Activated CD4-positive, alpha-beta T cell treated with anti-CD3 and anti-CD28 coated beads for 36 hours (primary cell): ENCODE measurements at regions of chr14 and their contacts with region 1.

Region 1: DNA sequence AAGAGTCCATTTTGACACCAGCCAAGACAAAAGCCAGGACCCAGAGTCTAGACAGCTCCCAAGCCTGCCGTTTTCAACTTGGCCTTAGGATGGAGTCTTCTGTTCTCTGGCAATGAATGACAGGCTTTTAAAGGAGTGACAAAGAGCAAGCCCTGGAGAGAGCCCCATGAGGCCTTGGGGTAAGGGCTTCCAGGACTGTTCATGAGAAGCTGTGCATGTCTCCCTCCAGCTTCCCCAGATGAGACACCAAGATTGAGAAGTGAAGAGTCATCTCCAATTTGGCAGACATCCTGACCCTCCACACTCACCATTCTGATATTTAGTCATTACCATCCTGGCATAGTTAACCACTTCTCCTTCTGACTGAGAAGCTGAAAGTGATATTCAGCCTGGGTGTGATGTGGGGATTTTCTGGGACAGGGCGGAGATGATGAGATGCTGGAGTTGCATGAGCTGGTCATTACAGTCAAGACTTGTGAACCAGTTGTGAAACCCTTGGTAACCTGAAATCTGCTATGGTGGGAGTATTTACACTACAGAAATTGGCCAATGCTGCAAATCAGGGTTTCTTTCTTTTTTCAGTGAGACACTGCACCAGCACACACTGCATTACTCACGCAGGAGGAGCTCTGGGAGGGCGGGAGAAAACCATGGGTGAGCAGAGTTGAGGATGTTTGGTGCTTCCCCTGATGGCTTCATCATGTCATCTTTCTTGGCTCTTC is 77.8 kb downstream of the VCPKMT start:
- DNase-seq: peak; percentile 88
- ATAC-seq: peak; percentile 82
- H3K4me3 Mint-ChIP-seq: peak overlapping the region; percentile 75
- H3K27ac Mint-ChIP-seq: peak overlapping the region; percentile 99
- H3K4me1 Mint-ChIP-seq: peaks cover 66% of the 10 kb centered on the region
- H3K27me3 Mint-ChIP-seq: no peaks in the 10 kb centered on the region

Region 2: GRCh38 chr14:49785773-49786172 is 252.8 kb before region 1 on chr14:
- CTCF ChIA-PET with region 1: no interaction called
- POLR2A ChIA-PET with region 1: no interaction called
- intact Hi-C with region 1: no loop called
- DNase-seq: no peak
- ATAC-seq: no peak
- H3K4me3 Mint-ChIP-seq: no peak overlapping the region
- H3K27ac Mint-ChIP-seq: no peak overlapping the region
- H3K4me1 Mint-ChIP-seq: no peaks in the 10 kb centered on the region
- H3K27me3 Mint-ChIP-seq: no peaks in the 10 kb centered on the region

Region 3: GRCh38 chr14:49796025-49796424 is 242.5 kb before region 1 on chr14:
- CTCF ChIA-PET with region 1: no interaction called
- POLR2A ChIA-PET with region 1: no interaction called
- intact Hi-C with region 1: no loop called
- DNase-seq: no peak
- ATAC-seq: no peak
- H3K4me3 Mint-ChIP-seq: no peak overlapping the region
- H3K27ac Mint-ChIP-seq: peak overlapping the region; percentile 24
- H3K4me1 Mint-ChIP-seq: peaks cover 8% of the 10 kb centered on the region
- H3K27me3 Mint-ChIP-seq: no peaks in the 10 kb centered on the region

Region 4: GRCh38 chr14:49862089-49862673 is 176.4 kb before region 1 on chr14:
- CTCF ChIA-PET with region 1: interaction called, 17 read pairs
- POLR2A ChIA-PET with region 1: interaction called, 27 read pairs
- intact Hi-C with region 1: loop called in 1 of 2 experiments (anchors 1 kb)
- DNase-seq: peak; percentile 92
- ATAC-seq: peak; percentile 13
- H3K4me3 Mint-ChIP-seq: no peak overlapping the region
- H3K27ac Mint-ChIP-seq: no peak overlapping the region
- H3K4me1 Mint-ChIP-seq: peaks cover 20% of the 10 kb centered on the region
- H3K27me3 Mint-ChIP-seq: no peaks in the 10 kb centered on the region

Region 5: DNA sequence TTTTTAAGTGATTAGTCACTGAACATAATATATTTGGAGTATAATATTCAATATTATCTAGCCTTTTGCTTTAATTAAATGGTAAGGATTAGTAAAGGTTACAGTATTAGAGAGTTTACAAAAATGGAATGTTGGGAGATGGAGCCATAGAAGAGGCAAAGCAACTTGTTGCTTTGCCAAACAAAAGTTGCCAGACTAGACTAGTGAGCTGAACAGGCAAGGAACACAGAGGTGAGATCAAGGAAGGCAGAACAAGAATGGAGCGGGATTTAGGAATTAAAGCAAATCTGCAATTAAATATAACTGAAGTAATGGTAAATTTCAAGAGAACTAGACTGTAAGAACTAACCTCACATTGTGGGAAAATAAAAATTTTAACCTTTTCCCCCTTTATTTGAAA is 140.6 kb before region 1 on chr14:
- CTCF ChIA-PET with region 1: interaction called, 7 read pairs
- POLR2A ChIA-PET with region 1: interaction called, 36 read pairs
- intact Hi-C with region 1: loop called (anchors 1 kb)
- DNase-seq: no peak
- ATAC-seq: no peak
- H3K4me3 Mint-ChIP-seq: peak overlapping the region; percentile 91
- H3K27ac Mint-ChIP-seq: peak overlapping the region; percentile 98
- H3K4me1 Mint-ChIP-seq: peaks cover 32% of the 10 kb centered on the region
- H3K27me3 Mint-ChIP-seq: no peaks in the 10 kb centered on the region

Region 6: DNA sequence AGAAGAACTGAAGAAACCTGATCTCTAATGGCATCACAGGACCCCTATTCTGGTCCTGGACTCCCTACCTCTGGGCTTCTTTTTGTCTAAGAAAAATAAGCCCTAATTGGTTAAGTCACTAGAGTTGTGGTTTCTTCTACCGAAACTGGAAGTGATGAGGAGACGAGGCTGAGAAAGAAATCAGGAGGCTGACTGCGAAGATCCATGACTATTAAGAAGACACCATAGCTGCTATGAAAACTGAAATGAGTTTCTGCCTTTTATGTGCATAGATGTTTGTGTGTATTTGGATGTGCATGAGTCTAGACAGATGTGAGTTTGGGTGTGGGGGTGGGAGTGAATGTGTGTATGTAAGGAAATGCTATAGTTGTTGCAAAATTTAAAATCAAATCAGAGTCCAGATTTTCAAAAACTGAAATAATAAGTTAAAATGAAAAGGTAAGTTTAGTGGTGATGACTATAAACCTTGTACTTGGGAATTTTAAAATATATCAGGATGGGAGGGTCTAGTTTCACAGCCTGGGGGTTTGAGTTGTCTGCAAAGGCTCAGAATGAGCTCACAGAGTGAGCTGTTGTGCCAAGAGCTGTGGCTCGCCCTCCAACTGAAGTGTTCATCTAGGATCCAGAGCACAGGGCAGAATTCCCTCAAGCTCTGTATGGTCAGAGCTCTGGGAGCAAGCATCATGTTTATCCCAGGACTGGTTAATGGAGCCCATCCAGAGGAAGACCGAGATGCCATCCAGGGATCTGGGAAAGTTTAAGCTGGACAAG is 17.1 kb before region 1 on chr14:
- CTCF ChIA-PET with region 1: interaction called, 8 read pairs
- POLR2A ChIA-PET with region 1: interaction called, 13 read pairs
- intact Hi-C with region 1: loop called (anchors 1 kb)
- DNase-seq: peak; percentile 47
- ATAC-seq: peak; percentile 88
- H3K4me3 Mint-ChIP-seq: peak overlapping the region; percentile 25
- H3K27ac Mint-ChIP-seq: peak overlapping the region; percentile 72
- H3K4me1 Mint-ChIP-seq: peaks cover 41% of the 10 kb centered on the region
- H3K27me3 Mint-ChIP-seq: no peaks in the 10 kb centered on the region

Region 7: GRCh38 chr14:50085570-50086320 is 47.2 kb after region 1 on chr14:
- CTCF ChIA-PET with region 1: interaction called, 21 read pairs
- POLR2A ChIA-PET with region 1: interaction called, 65 read pairs
- intact Hi-C with region 1: loop called (anchors 1 kb)
- DNase-seq: peak; percentile 71
- ATAC-seq: peak; percentile 27
- H3K4me3 Mint-ChIP-seq: peak overlapping the region; percentile 45
- H3K27ac Mint-ChIP-seq: peak overlapping the region; percentile 94
- H3K4me1 Mint-ChIP-seq: peaks cover 94% of the 10 kb centered on the region
- H3K27me3 Mint-ChIP-seq: no peaks in the 10 kb centered on the region

Region 8: GRCh38 chr14:50109342-50109741 is 70.8 kb after region 1 on chr14:
- CTCF ChIA-PET with region 1: interaction called, 13 read pairs
- POLR2A ChIA-PET with region 1: interaction called, 5 read pairs
- intact Hi-C with region 1: loop called (anchors 1 to 2 kb)
- DNase-seq: no peak
- ATAC-seq: no peak
- H3K4me3 Mint-ChIP-seq: no peak overlapping the region
- H3K27ac Mint-ChIP-seq: no peak overlapping the region
- H3K4me1 Mint-ChIP-seq: peaks cover 32% of the 10 kb centered on the region
- H3K27me3 Mint-ChIP-seq: no peaks in the 10 kb centered on the region